ENCODE measurements at regions of chr15 and their contacts with region 1.

Region 1: DNA sequence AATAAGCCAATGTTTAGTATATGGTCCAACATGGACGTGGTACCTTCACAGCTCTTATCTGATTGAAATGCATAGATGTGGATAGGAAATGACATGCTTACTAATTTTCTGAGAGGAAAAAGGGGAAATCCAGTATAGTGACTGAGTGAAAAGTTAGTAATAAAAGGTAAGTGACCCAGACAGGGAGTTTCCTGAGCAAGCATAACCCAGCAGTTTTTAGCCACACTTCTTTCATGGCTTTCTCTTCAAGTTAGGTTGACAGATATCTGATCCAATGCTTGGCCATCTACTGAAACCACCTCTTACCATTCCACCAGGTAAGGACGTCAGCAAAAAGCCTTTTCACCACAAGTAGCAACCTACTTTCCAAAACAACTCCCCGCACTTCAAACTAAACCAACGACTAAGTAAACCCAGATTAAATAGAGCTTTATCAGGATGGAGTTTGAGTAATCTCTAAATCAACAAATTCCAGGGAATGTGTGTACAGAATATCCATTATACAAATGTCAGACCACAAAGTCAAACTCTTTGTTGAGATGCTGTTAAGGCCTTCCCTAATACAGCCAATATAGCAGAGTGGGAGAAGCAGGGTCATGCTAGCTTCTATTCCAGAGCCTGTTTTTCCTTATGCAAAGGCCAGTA is 329.7 kb downstream of the RORA start:
- DNase-seq: peak; percentile 76
- ATAC-seq: peak; percentile 79
- H3K4me3 ChIP-seq: no peak overlapping the region
- H3K27ac ChIP-seq: peak overlapping the region; percentile 60; the same call in 1 of the 2 replicates
- H3K4me1 ChIP-seq: peaks cover 45% of the 10 kb centered on the region
- H3K27me3 ChIP-seq: no peaks in the 10 kb centered on the region
- CTCF ChIP-seq: no peak
- EP300 ChIP-seq: peak; percentile 76 to 87; a peak in 3 of 4 replicates
- POLR2A ChIP-seq: no peak
- RAD21 ChIP-seq: no peak

Region 2: DNA sequence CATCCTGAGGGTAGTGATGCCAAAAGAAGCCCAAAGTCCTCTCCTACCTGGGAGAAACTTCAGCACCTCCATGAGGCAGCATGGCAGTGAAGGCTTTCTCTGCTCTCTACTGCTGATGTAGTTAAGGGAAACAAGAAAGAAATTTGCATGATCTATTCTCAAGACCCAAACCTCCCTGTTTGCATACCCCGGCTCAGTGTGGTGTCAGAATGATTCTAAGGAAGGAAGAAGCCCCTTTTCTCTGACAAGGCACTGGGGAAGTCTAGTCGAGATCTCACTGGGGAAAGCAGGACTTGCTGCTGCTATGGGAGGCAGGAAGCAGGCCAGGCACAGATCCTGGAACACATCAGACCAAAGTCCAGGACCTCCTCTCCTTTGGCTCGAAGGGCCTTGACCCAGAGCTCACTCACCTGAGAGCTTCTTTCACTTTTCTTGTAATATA is 331.1 kb before region 1 on chr15:
- CTCF ChIA-PET with region 1: no interaction called
- POLR2A ChIA-PET with region 1: interaction called, 5 read pairs
- RAD21 ChIA-PET with region 1: interaction called, 14 read pairs
- SMC1A ChIA-PET with region 1: interaction called, 7 read pairs
- in situ Hi-C with region 1: no loop called
- intact Hi-C with region 1: no loop called
- DNase-seq: peak; percentile 87
- ATAC-seq: peak; percentile 79
- H3K4me3 ChIP-seq: peak overlapping the region; percentile 26
- H3K27ac ChIP-seq: peak overlapping the region; percentile 93
- H3K4me1 ChIP-seq: peaks cover 75% of the 10 kb centered on the region
- H3K27me3 ChIP-seq: no peaks in the 10 kb centered on the region
- CTCF ChIP-seq: no peak
- EP300 ChIP-seq: peak in 1 of 2 experiments; percentile 61; a peak in 2 of 4 replicates
- POLR2A ChIP-seq: peak; percentile 79
- RAD21 ChIP-seq: no peak

Region 3: DNA sequence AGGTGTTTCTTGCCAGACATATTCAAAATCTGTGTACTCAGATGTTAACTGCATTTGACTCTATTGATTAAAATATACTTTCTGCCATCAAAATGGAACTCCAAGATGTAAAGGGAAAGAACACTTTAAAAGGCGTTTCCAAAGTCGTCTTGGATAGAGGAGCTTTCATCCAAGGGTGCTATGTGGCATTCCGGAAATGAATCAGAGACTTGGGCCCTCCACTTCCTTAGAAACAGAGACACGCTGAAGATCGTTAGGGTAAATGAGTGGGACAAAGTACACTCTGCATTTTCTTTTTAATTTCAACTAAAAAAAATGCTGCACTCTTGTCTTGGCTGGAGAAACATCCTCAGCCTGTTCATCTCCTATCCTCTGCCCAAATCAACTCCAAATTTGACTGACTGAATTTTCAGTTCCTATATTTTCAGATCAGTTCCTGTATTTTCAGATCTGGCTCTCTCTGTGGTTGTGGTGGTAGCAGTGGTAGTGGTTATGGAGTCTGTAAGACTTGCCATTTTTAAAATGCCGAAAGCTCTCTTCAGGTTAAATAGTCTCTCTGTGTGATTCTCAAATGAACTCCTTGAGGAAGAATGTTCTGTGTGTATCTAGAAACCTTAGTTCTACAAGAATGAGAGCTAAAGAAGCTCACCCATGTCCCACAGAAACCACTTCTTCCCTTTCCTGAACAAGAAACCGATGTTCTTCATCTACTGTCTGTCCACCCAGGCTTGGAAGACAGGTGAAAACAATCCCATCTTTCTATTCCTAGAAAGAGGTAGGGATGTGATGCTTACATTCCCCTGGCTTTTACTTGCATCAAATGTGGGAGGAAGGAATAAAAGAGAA is 263.7 kb before region 1 on chr15:
- CTCF ChIA-PET with region 1: no interaction called
- POLR2A ChIA-PET with region 1: no interaction called
- RAD21 ChIA-PET with region 1: no interaction called
- SMC1A ChIA-PET with region 1: no interaction called
- in situ Hi-C with region 1: no loop called
- intact Hi-C with region 1: loop called (anchors 5 kb)
- DNase-seq: peak; percentile 79
- ATAC-seq: peak; percentile 93
- H3K4me3 ChIP-seq: no peak overlapping the region
- H3K27ac ChIP-seq: peak overlapping the region; percentile 78
- H3K4me1 ChIP-seq: peaks cover 22% of the 10 kb centered on the region
- H3K27me3 ChIP-seq: no peaks in the 10 kb centered on the region
- CTCF ChIP-seq: no peak
- EP300 ChIP-seq: peak; percentile 32 to 81; a peak in 3 of 4 replicates
- POLR2A ChIP-seq: no peak
- RAD21 ChIP-seq: no peak

Region 4: GRCh38 chr15:60720493-60721256 is 178.8 kb before region 1 on chr15:
- CTCF ChIA-PET with region 1: interaction called, 3 read pairs
- POLR2A ChIA-PET with region 1: no interaction called
- RAD21 ChIA-PET with region 1: interaction called, 12 read pairs
- SMC1A ChIA-PET with region 1: interaction called, 5 read pairs
- in situ Hi-C with region 1: no loop called
- intact Hi-C with region 1: loop called (anchors 2 kb)
- DNase-seq: peak; percentile 67
- ATAC-seq: peak; percentile 88
- H3K4me3 ChIP-seq: peak overlapping the region; percentile 48; the same call in 1 of the 2 replicates
- H3K27ac ChIP-seq: peak overlapping the region; percentile 68
- H3K4me1 ChIP-seq: peaks cover 35% of the 10 kb centered on the region
- H3K27me3 ChIP-seq: no peaks in the 10 kb centered on the region
- CTCF ChIP-seq: no peak
- EP300 ChIP-seq: peak; percentile 28 to 54; a peak in 3 of 4 replicates
- POLR2A ChIP-seq: no peak
- RAD21 ChIP-seq: no peak; the same call in 1 of the 2 replicates

Region 5: DNA sequence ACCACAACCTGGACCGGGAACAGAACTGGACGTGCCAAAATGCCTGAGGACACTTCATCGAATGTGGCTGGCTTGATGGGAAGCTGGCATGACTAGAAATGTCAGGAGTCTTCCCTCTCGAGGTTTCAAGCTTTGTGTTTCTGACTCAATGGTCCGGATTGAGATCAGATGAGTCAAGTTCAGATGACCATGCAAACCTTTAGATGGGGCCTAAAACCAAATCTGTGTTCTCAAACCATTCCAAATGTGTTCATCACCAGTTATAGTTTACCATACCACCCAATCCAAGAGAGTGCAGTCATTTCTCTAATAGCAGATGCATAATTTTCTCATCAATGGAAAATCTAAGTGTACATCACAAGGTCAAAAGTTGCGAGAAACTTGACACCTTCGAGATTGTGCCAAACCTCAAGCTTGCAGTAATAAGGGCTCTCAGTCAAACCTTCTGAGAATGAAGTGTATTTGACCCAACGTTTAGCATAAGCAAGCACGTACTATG is 39.4 kb before region 1 on chr15:
- CTCF ChIA-PET with region 1: interaction called, 5 read pairs
- POLR2A ChIA-PET with region 1: interaction called, 4 read pairs
- RAD21 ChIA-PET with region 1: interaction called, 27 read pairs
- SMC1A ChIA-PET with region 1: interaction called, 16 read pairs
- in situ Hi-C with region 1: no loop called
- intact Hi-C with region 1: loop called (anchors 5 kb)
- DNase-seq: no peak
- ATAC-seq: no peak
- H3K4me3 ChIP-seq: no peak overlapping the region
- H3K27ac ChIP-seq: no peak overlapping the region
- H3K4me1 ChIP-seq: no peaks in the 10 kb centered on the region
- H3K27me3 ChIP-seq: no peaks in the 10 kb centered on the region
- CTCF ChIP-seq: no peak
- EP300 ChIP-seq: no peak
- POLR2A ChIP-seq: no peak
- RAD21 ChIP-seq: no peak

Region 6: DNA sequence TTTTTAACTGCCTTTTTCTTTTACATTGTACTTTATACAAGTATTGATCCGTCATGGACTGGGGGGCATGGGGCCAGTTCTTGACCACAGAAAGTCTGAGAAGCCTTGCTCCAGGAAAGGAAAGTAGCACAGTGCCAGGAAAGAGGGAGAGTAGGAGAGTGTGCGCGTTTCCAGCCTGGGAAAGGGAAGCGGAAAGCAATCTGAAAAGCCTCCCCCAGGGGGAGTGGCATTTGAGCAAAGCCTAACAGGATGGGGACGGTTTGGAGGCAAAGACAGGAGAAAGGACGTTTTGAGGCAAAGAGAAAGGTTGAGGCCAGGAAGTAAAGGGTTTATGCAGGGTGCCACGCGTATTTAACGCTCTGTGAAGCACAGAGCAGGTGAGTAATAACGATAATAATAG is 212.8 kb after region 1 on chr15:
- CTCF ChIA-PET with region 1: no interaction called
- POLR2A ChIA-PET with region 1: no interaction called
- RAD21 ChIA-PET with region 1: no interaction called
- SMC1A ChIA-PET with region 1: no interaction called
- in situ Hi-C with region 1: no loop called
- intact Hi-C with region 1: no loop called
- DNase-seq: no peak
- ATAC-seq: no peak
- H3K4me3 ChIP-seq: no peak overlapping the region
- H3K27ac ChIP-seq: no peak overlapping the region
- H3K4me1 ChIP-seq: peaks cover 3% of the 10 kb centered on the region; the same call in 1 of the 2 replicates
- H3K27me3 ChIP-seq: peaks cover 0 to 4% of the 10 kb centered on the region in 2 experiments; a peak in 3 of 4 replicates
- CTCF ChIP-seq: no peak
- EP300 ChIP-seq: no peak
- POLR2A ChIP-seq: no peak
- RAD21 ChIP-seq: no peak

Measured in GM12878 (cell line).